MCF 10A (cell line): ENCODE measurements at regions of chr3 and their contacts with region 1.

Region 1: DNA sequence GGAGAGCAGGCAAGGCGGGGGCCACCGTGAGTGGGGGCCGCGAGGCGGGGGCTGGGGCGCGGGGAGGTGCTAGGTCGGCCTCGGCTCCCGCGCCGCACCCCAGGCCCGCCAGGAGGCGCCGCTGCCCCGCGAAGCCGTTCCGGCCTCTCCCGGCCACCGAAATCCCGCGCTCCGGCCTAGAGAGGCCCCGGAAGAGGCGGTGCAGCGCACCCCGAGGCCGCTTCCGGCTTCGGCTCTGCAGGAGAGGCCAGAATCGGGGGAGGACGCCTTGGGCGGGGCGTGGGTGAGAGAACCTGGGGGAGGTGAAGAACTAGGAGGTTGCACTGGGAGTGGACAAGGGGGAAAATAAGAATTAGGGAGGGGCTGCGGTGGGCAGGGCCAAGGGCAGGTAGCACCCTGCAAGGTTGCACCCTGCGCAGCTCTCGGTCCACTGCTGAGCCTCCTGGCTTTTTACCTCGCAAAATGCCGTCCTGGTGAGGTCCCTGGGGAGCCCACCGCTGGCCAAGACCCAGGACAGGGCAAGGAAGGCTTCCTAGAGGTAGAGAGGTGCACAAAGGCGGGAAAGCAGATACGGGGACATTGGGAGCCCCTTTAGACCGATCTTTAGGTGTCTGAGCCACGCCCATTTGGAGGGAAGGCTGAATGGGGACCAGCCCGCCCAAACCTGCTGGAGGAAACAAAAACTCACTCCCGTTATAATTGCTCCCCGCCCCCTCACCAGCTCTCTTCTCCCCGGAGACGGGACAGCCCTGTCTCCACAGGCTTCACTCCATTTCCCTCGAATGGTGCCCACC is 8.4 kb upstream of the GNAI2 start:
- DNase-seq: peak; percentile 95
- H3K4me3 Mint-ChIP-seq: peak overlapping the region; percentile 74
- H3K27ac Mint-ChIP-seq: peak overlapping the region; percentile 17
- H3K4me1 Mint-ChIP-seq: peaks cover 12% of the 10 kb centered on the region
- H3K27me3 Mint-ChIP-seq: peaks cover 16% of the 10 kb centered on the region
- CTCF ChIP-seq: peak; percentile 91

Region 2: GRCh38 chr3:50154840-50155474 is 72.6 kb before region 1 on chr3 and contains the start of gene SEMA3F:
- CTCF ChIA-PET with region 1: interaction called, 9 read pairs
- POLR2A ChIA-PET with region 1: interaction called, 10 read pairs
- intact Hi-C with region 1: no loop called
- DNase-seq: peak; percentile 78
- H3K4me3 Mint-ChIP-seq: peak within 1 kb of the TSS; percentile 84
- H3K27ac Mint-ChIP-seq: peak within 1 kb of the TSS; percentile 61
- H3K4me1 Mint-ChIP-seq: peaks cover 63% of the 10 kb centered on the region
- H3K27me3 Mint-ChIP-seq: no peaks in the 10 kb centered on the region
- CTCF ChIP-seq: peak; percentile 44
- total RNA-seq, gene SEMA3F: 34.6 and 51.5 TPM in 2 replicates

Region 3: DNA sequence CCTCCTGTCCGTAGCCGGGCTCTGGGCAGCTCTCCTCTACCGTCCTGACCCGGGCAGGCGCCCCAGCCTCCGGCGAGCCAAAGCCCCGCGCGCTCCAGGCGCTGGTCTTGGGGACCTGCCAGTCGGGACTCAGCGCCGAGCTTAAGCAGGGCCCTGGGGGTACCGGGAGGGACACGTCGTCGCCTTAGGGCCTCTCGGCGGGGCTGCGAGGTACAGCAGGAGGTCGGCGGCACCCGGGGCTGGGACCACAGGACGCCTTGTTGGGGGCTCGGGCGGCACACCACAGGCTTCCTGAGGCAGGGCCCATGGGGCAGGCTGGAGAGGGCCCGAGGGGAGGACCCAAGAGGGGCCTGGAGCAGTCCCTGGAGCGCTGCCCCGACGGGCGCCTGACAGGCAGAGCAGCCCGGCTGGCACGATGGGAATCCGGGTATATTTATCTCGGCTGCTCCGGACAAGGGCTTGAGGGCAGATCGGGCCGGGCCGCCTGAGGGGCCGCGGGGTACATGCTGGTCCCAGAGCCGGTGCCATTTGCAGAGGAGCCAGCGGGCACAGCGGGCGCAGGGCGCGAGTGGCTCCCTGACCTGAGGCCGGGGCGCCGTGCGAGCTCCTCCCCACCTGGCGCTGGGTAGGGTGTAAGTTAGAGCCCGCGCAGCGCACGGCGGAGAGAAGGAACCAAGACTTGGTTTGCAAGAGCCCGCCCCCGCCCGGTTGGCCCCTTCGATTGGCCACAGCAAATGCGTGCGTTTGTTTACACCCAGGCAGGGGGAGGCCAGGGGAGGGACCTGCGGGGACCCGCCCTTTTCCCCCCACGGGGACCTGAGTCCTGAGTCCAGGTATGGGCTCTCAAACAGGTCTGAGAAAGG is 21.9 kb before region 1 on chr3:
- CTCF ChIA-PET with region 1: interaction called, 15 read pairs
- POLR2A ChIA-PET with region 1: interaction called, 3 read pairs
- intact Hi-C with region 1: no loop called
- DNase-seq: no peak
- H3K4me3 Mint-ChIP-seq: no peak overlapping the region
- H3K27ac Mint-ChIP-seq: no peak overlapping the region
- H3K4me1 Mint-ChIP-seq: no peaks in the 10 kb centered on the region
- H3K27me3 Mint-ChIP-seq: no peaks in the 10 kb centered on the region
- CTCF ChIP-seq: no peak

Region 4: GRCh38 chr3:50245831-50246516 is 18.4 kb after region 1 on chr3:
- CTCF ChIA-PET with region 1: interaction called, 107 read pairs
- POLR2A ChIA-PET with region 1: interaction called, 26 read pairs
- intact Hi-C with region 1: loop called (anchors 1 kb)
- DNase-seq: peak; percentile 91
- H3K4me3 Mint-ChIP-seq: peak overlapping the region; percentile 55
- H3K27ac Mint-ChIP-seq: peak overlapping the region; percentile 91
- H3K4me1 Mint-ChIP-seq: peaks cover 54% of the 10 kb centered on the region
- H3K27me3 Mint-ChIP-seq: no peaks in the 10 kb centered on the region
- CTCF ChIP-seq: peak; percentile 98

Region 5: GRCh38 chr3:50260027-50260941 is 32.7 kb after region 1 on chr3:
- CTCF ChIA-PET with region 1: interaction called, 70 read pairs
- POLR2A ChIA-PET with region 1: interaction called, 3 read pairs
- intact Hi-C with region 1: loop called (anchors 1 kb)
- DNase-seq: peak; percentile 85
- H3K4me3 Mint-ChIP-seq: peak overlapping the region; percentile 62
- H3K27ac Mint-ChIP-seq: peak overlapping the region; percentile 63
- H3K4me1 Mint-ChIP-seq: no peaks in the 10 kb centered on the region
- H3K27me3 Mint-ChIP-seq: no peaks in the 10 kb centered on the region
- CTCF ChIP-seq: peak; percentile 98

Region 6: GRCh38 chr3:50272911-50273693 is 45.5 kb after region 1 on chr3:
- CTCF ChIA-PET with region 1: interaction called, 10 read pairs
- POLR2A ChIA-PET with region 1: interaction called, 3 read pairs
- intact Hi-C with region 1: loop called (anchors 1 kb)
- DNase-seq: peak; percentile 85
- H3K4me3 Mint-ChIP-seq: peak overlapping the region; percentile 45
- H3K27ac Mint-ChIP-seq: no peak overlapping the region
- H3K4me1 Mint-ChIP-seq: peaks cover 42% of the 10 kb centered on the region
- H3K27me3 Mint-ChIP-seq: no peaks in the 10 kb centered on the region
- CTCF ChIP-seq: peak; percentile 94